ENCODE measurements at regions of chr21 and their contacts with region 1.

Region 1: DNA sequence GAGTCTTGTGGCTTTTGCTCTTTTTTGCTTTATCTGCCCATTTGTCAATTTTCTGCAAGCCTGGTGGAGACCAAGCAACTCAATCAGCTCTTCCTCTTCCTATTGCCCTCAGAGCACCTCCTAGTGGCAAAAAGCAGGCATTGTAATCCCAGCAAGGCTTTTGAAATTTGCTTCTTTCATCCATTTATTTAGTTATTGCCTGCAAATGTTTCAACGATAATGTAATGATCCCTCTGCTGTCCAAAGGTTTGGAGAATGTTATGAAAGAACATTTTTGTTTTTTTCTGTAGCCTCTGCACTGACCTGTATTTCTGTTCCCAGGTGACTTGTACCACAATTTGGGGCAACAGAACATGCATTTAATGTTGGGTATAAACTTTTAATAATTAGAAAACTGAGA is 127.8 kb downstream of the GABPA start:
- DNase-seq: peak; percentile 49
- H3K4me3 Mint-ChIP-seq: no peak overlapping the region
- H3K27ac Mint-ChIP-seq: no peak overlapping the region
- H3K4me1 Mint-ChIP-seq: no peaks in the 10 kb centered on the region
- H3K27me3 Mint-ChIP-seq: no peaks in the 10 kb centered on the region

Region 2: GRCh38 chr21:25670726-25671125 is 191.9 kb before region 1 on chr21:
- CTCF ChIA-PET with region 1: no interaction called
- intact Hi-C with region 1: no loop called
- DNase-seq: no peak
- H3K4me3 Mint-ChIP-seq: no peak overlapping the region
- H3K27ac Mint-ChIP-seq: no peak overlapping the region
- H3K4me1 Mint-ChIP-seq: no peaks in the 10 kb centered on the region
- H3K27me3 Mint-ChIP-seq: peaks cover 2% of the 10 kb centered on the region

Region 3: DNA sequence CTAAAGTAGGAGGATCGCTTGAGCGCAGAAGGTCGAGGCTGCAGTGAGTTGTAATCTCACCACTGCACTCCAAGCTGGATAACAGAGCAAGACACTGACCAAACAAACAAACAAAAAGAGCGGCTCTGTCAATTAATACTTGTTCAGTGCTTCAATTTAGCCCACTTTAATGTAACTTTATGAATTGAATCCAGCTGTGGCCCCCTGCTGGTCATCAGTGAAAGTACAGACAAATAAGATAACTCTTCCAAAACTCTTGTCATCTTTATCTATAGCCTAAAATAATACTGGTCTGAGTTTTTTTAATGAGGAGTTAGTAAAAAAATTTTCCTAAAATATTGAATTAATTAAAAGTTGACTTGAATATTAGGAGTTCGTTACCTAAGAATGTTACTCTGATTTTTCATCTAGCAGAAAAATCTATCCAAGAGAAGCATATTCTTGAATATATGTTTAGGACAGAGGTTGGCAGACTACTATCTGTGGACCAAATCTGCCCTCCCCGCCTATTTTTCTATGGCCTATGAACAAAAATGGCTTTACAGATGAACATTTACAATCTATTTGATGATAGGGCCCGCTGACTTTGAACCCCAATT is 154.0 kb before region 1 on chr21:
- CTCF ChIA-PET with region 1: no interaction called
- intact Hi-C with region 1: loop called (anchors 1 kb)
- DNase-seq: peak; percentile 60
- H3K4me3 Mint-ChIP-seq: no peak overlapping the region
- H3K27ac Mint-ChIP-seq: no peak overlapping the region
- H3K4me1 Mint-ChIP-seq: no peaks in the 10 kb centered on the region
- H3K27me3 Mint-ChIP-seq: no peaks in the 10 kb centered on the region

Region 4: DNA sequence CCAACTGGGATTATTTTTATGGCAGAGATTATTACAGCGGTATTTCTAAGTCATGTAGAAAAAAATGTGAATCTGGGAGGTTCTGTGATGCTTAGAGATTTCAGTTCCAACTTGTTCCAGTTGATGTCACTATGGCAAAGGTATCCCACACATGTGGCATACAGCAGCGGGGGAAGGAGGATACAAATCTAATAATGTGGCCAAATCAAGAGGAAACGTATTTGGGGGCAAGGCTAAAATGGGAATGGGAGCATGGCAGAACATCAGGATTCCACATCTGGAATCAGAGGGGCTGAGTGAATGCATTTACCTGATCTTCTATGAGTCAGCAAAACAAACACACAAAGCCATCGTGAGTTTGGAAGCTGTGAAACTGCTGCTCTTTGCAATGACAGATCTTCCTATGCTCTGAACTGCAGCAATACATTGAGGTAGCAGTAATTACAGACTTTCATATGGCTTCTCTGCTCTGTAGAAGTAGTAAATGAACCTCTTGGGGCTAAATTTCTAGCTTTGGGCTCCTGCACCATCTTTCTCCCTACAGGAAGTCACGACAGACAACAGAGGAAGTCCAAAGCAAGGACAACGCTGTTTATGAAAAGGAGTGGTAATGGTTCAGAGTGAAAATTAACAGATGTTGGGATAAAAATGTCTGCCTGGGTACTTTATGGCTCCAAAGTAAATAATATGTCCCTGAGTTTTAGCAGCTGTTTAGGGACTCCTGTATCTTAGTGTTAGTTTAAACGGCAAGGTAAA is 72.3 kb before region 1 on chr21:
- CTCF ChIA-PET with region 1: interaction called, 9 read pairs
- intact Hi-C with region 1: loop called (anchors 1 kb)
- DNase-seq: peak; percentile 43
- H3K4me3 Mint-ChIP-seq: peak overlapping the region; percentile 66
- H3K27ac Mint-ChIP-seq: peak overlapping the region; percentile 22
- H3K4me1 Mint-ChIP-seq: peaks cover 11% of the 10 kb centered on the region
- H3K27me3 Mint-ChIP-seq: peaks cover 4% of the 10 kb centered on the region

Measured in activated naive CD4-positive, alpha-beta T cell treated with anti-CD3 and anti-CD28 coated beads for 36 hours (primary cell).